CD8-positive, alpha-beta T cell (primary cell): ENCODE measurements at regions of chr5 and their contacts with region 1.

Region 1: GRCh38 chr5:138575194-138576015 is at the start of gene HSPA9:
- DNase-seq: peak; percentile 91 to 100 (median 97)
- ATAC-seq: peak; percentile 82
- H3K4me3 ChIP-seq: peak within 1 kb of the TSS; percentile 77 to 80
- H3K4me3 Mint-ChIP-seq: peak within 1 kb of the TSS; percentile 99
- H3K27ac ChIP-seq: peak within 1 kb of the TSS; percentile 98 to 99
- H3K27ac Mint-ChIP-seq: peak within 1 kb of the TSS; percentile 100
- H3K4me1 ChIP-seq: peaks cover 21% of the 10 kb centered on the region
- H3K4me1 Mint-ChIP-seq: peaks cover 43% of the 10 kb centered on the region
- H3K27me3 ChIP-seq: no peaks in the 10 kb centered on the region
- H3K27me3 Mint-ChIP-seq: no peaks in the 10 kb centered on the region
- CTCF ChIP-seq: no peak
- total RNA-seq, gene HSPA9: 464 to 500 TPM

Region 2: DNA sequence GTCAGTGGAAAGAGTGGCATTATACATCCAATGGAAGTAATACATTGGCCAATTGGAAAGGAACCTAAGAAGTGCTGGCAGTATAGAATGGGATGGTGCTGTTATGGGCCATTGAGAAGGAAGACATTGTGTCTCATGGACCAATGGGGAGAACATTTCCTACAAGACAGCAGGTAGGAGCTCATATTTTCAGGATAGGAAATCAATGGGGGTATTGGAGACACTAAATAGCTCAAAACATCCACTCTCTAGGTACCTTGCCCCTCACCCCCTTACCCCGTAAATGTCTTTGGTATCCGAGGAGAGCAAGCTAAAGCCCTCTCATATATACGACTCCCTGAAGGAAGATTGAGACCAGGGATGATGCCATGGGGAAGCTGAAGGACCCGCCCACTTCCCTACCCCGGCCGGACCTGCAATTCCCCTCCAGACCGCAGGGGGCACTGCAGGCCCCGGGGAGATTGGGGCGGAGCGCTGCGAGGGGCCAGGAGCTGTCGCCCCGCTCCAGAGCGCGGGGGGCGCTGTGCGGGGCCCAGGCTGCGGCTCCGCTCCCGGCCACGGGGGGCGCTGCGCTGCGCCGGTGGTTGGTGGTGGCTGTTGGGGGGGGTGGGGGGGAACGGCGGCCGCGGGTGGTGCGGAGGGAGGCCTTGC is 223.2 kb before region 1 on chr5 and contains the start of gene KDM3B:
- CTCF ChIA-PET with region 1: interaction called, 3 read pairs
- POLR2A ChIA-PET with region 1: interaction called, 8 read pairs
- intact Hi-C with region 1: loop called (anchors 2 to 5 kb)
- DNase-seq: peak; percentile 86 to 96 (median 92)
- ATAC-seq: peak; percentile 89
- H3K4me3 ChIP-seq: peak within 1 kb of the TSS; percentile 87 to 97
- H3K4me3 Mint-ChIP-seq: peak within 1 kb of the TSS; percentile 97
- H3K27ac ChIP-seq: peak within 1 kb of the TSS; percentile 83 to 89
- H3K27ac Mint-ChIP-seq: peak within 1 kb of the TSS; percentile 97
- H3K4me1 ChIP-seq: peaks cover 34% of the 10 kb centered on the region
- H3K4me1 Mint-ChIP-seq: peaks cover 47% of the 10 kb centered on the region
- H3K27me3 ChIP-seq: no peaks in the 10 kb centered on the region
- H3K27me3 Mint-ChIP-seq: no peaks in the 10 kb centered on the region
- CTCF ChIP-seq: peak; percentile 99
- total RNA-seq, gene KDM3B: 60.2 to 60.3 TPM

Region 3: GRCh38 chr5:138382347-138382746 is 193.1 kb before region 1 on chr5:
- CTCF ChIA-PET with region 1: no interaction called
- POLR2A ChIA-PET with region 1: no interaction called
- intact Hi-C with region 1: no loop called
- DNase-seq: no peak
- ATAC-seq: no peak
- H3K4me3 ChIP-seq: no peak overlapping the region
- H3K4me3 Mint-ChIP-seq: no peak overlapping the region
- H3K27ac ChIP-seq: no peak overlapping the region
- H3K27ac Mint-ChIP-seq: no peak overlapping the region
- H3K4me1 ChIP-seq: no peaks in the 10 kb centered on the region
- H3K4me1 Mint-ChIP-seq: no peaks in the 10 kb centered on the region
- H3K27me3 ChIP-seq: no peaks in the 10 kb centered on the region
- H3K27me3 Mint-ChIP-seq: no peaks in the 10 kb centered on the region
- CTCF ChIP-seq: no peak

Region 4: GRCh38 chr5:138565100-138565821 is 10.1 kb before region 1 on chr5:
- CTCF ChIA-PET with region 1: interaction called, 8 read pairs
- POLR2A ChIA-PET with region 1: interaction called, 32 read pairs
- intact Hi-C with region 1: loop called in 1 of 2 experiments (anchors 1 kb)
- DNase-seq: peak in 5 of 9 experiments; percentile 20 to 93 (median 52)
- ATAC-seq: peak; percentile 86
- H3K4me3 ChIP-seq: peak overlapping the region in 1 of 2 experiments; percentile 1
- H3K4me3 Mint-ChIP-seq: peak overlapping the region; percentile 64
- H3K27ac ChIP-seq: peak overlapping the region; percentile 62 to 88
- H3K27ac Mint-ChIP-seq: peak overlapping the region; percentile 89
- H3K4me1 ChIP-seq: peaks cover 45% of the 10 kb centered on the region
- H3K4me1 Mint-ChIP-seq: peaks cover 69% of the 10 kb centered on the region
- H3K27me3 ChIP-seq: no peaks in the 10 kb centered on the region
- H3K27me3 Mint-ChIP-seq: no peaks in the 10 kb centered on the region
- CTCF ChIP-seq: no peak

Region 5: GRCh38 chr5:138610918-138611677 is 35.7 kb after region 1 on chr5:
- CTCF ChIA-PET with region 1: no interaction called
- POLR2A ChIA-PET with region 1: no interaction called
- intact Hi-C with region 1: no loop called
- DNase-seq: peak in 2 of 9 experiments; percentile 26 to 43
- ATAC-seq: peak; percentile 42
- H3K4me3 ChIP-seq: no peak overlapping the region
- H3K4me3 Mint-ChIP-seq: peak overlapping the region; percentile 16
- H3K27ac ChIP-seq: no peak overlapping the region
- H3K27ac Mint-ChIP-seq: no peak overlapping the region
- H3K4me1 ChIP-seq: peaks cover 13% of the 10 kb centered on the region
- H3K4me1 Mint-ChIP-seq: peaks cover 11% of the 10 kb centered on the region
- H3K27me3 ChIP-seq: peaks cover 4 to 8% of the 10 kb centered on the region in 2 experiments
- H3K27me3 Mint-ChIP-seq: peaks cover 52% of the 10 kb centered on the region
- CTCF ChIP-seq: no peak

Region 6: GRCh38 chr5:138772986-138773594 is 197.7 kb after region 1 on chr5:
- CTCF ChIA-PET with region 1: interaction called, 7 read pairs
- POLR2A ChIA-PET with region 1: no interaction called
- intact Hi-C with region 1: loop called in 1 of 2 experiments (anchors 5 kb)
- DNase-seq: no peak
- ATAC-seq: no peak
- H3K4me3 ChIP-seq: no peak overlapping the region
- H3K4me3 Mint-ChIP-seq: no peak overlapping the region
- H3K27ac ChIP-seq: no peak overlapping the region
- H3K27ac Mint-ChIP-seq: no peak overlapping the region
- H3K4me1 ChIP-seq: no peaks in the 10 kb centered on the region
- H3K4me1 Mint-ChIP-seq: no peaks in the 10 kb centered on the region
- H3K27me3 ChIP-seq: no peaks in the 10 kb centered on the region
- H3K27me3 Mint-ChIP-seq: peaks cover 17% of the 10 kb centered on the region
- CTCF ChIP-seq: no peak

Region 7: DNA sequence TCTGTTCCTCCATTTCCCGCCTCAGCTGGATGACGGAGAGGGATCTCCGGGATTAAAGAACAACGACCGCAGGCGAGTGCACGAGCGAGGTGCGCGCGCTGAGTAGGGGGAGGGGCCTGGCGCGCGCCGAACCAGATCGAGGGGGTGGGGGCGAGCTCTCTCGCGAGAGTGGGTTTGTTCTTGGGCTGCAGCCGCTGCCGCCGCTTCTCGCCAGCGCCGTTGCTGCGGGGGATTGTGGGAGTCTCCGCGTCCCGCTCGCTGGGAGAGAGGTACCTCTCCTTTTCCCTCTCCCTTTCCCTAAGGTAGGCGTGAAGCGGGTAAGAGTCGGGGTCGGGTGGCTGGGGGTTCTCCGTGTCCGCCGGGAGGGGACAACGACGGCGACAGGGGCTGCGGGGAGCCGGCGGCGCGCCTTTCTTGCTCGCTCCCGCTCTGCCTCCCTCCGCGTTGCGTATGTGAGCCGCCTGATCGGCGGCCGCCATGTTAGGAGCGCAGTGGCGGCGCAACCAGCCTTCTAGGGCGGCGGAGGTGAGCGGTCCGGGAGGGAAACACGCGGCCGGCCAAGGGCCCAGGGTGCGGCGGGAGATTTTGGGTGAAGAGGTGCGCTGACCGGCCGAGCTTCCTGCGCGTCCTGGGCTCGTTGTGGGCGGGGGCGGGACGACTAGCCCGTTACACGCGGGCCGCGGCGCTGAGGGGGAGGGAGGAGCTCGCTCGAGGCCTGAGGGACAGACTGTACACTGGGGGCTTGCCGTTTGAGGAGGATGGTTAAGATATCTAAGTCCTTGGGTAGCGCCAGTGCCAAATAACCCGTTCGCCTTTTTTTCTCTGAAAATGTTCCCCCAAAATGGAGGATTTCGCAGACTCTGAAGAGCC is 718.3 kb after region 1 on chr5 and contains the start of gene MATR3:
- CTCF ChIA-PET with region 1: no interaction called
- POLR2A ChIA-PET with region 1: interaction called, 15 read pairs
- intact Hi-C with region 1: loop called in 1 of 2 experiments (anchors 1 kb)
- DNase-seq: peak; percentile 88 to 95 (median 93)
- ATAC-seq: peak; percentile 90
- H3K4me3 ChIP-seq: peak within 1 kb of the TSS; percentile 72 to 94
- H3K4me3 Mint-ChIP-seq: peak within 1 kb of the TSS; percentile 98
- H3K27ac ChIP-seq: peak within 1 kb of the TSS; percentile 98
- H3K27ac Mint-ChIP-seq: peak within 1 kb of the TSS; percentile 98
- H3K4me1 ChIP-seq: peaks cover 34% of the 10 kb centered on the region
- H3K4me1 Mint-ChIP-seq: peaks cover 41% of the 10 kb centered on the region
- H3K27me3 ChIP-seq: no peaks in the 10 kb centered on the region
- H3K27me3 Mint-ChIP-seq: no peaks in the 10 kb centered on the region
- CTCF ChIP-seq: no peak
- total RNA-seq, gene MATR3: 420 to 430 TPM